Ascending aorta (tissue), 2 donors: ENCODE measurements at regions of chr17 and their contacts with region 1.

Region 1: GRCh38 chr17:75440738-75441448 is 15.5 kb upstream of the TMEM94 start:
- DNase-seq: no peak
- H3K4me3 ChIP-seq: no peak overlapping the region
- H3K27ac ChIP-seq: peak overlapping the region; percentile 92 to 98
- H3K4me1 ChIP-seq: peaks cover 7 to 34% of the 10 kb centered on the region in 2 donors
- H3K27me3 ChIP-seq: no peaks in the 10 kb centered on the region
- CTCF ChIP-seq: no peak

Region 2: GRCh38 chr17:75476271-75476671 is 35.4 kb after region 1 on chr17:
- intact Hi-C with region 1: loop called (anchors 5 kb)
- DNase-seq: no peak
- H3K4me3 ChIP-seq: peak overlapping the region in 1 of 2 donors; percentile 45
- H3K27ac ChIP-seq: peak overlapping the region; percentile 80 to 85
- H3K4me1 ChIP-seq: peaks cover 9 to 25% of the 10 kb centered on the region in 2 donors
- H3K27me3 ChIP-seq: no peaks in the 10 kb centered on the region
- CTCF ChIP-seq: no peak

Region 3: GRCh38 chr17:75693500-75694481 is 252.9 kb after region 1 on chr17:
- intact Hi-C with region 1: no loop called
- DNase-seq: peak; percentile 43 to 71
- H3K4me3 ChIP-seq: no peak overlapping the region
- H3K27ac ChIP-seq: peak overlapping the region; percentile 55 to 78
- H3K4me1 ChIP-seq: peaks cover 0 to 2% of the 10 kb centered on the region in 2 donors
- H3K27me3 ChIP-seq: no peaks in the 10 kb centered on the region
- CTCF ChIP-seq: no peak